Activated T-helper 1 cell treated with anti-CD3 and anti-CD28 coated beads, Interleukin-12 subunit alpha, Interleukin-12 subunit beta, Interleukin-2, Interleukin-4 antibody, amounts not matched to agents 30 ng/mL and 10 ng/mL and 1 ng/mL, durations not matched to agents 14 hours and 24 hours and 36 hours (primary cell): ENCODE measurements at regions of chr14 and their contacts with region 1.

Region 1: GRCh38 chr14:74018586-74019407 is at the starts of genes BBOF1 and ENTPD5:
- DNase-seq: peak; percentile 85
- H3K4me3 Mint-ChIP-seq: peak within 1 kb of the TSS; percentile 95
- H3K27ac Mint-ChIP-seq: peak within 1 kb of the TSS; percentile 97
- H3K4me1 Mint-ChIP-seq: peaks cover 17% of the 10 kb centered on the region
- H3K27me3 Mint-ChIP-seq: peaks cover 3% of the 10 kb centered on the region
- total RNA-seq, gene BBOF1: 0.51 and 0.88 TPM in 2 replicates
- total RNA-seq, gene ENTPD5: 10.7 and 12.2 TPM in 2 replicates

Region 2: DNA sequence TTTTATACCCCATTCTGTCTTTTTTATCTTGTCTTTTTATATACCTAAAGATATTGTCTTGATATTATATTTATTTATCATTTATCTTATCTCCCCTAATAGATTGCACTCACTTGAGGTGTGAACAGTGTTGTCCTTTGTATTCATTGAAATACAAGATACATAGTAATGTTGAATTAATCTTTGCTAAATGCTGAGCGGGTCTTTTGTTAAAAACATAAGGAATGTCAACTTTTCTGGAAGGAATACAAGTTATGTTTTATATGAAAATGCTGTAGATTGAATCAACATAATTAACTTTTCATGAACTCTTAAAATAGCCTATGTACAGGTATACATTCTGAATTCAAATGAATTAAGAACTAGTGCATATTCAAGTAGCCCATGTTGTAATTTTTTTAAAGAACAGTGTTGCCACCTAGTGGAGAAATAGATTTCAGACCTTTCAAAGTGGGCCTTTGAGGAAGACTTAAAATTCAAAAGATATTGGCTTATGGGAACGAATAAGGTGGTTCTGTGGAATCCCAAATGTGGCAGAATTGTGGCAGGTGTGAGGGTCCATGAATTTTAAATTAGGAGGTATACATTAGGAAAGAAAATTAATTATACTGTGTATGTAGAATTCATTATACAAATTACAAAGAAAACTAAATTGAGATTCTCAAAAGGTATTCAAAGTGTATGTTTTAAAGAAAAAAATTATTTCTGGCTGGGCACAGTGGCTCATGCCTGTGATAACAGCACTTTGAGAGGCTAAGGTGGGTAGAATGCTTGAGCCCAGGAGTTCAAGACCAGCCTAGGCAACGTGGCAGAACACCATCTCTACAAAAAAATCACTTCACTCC is 19.4 kb after region 1 on chr14:
- intact Hi-C with region 1: loop called (anchors 1 kb)
- DNase-seq: no peak
- H3K4me3 Mint-ChIP-seq: no peak overlapping the region
- H3K27ac Mint-ChIP-seq: no peak overlapping the region
- H3K4me1 Mint-ChIP-seq: no peaks in the 10 kb centered on the region
- H3K27me3 Mint-ChIP-seq: no peaks in the 10 kb centered on the region

Region 3: GRCh38 chr14:74048281-74048680 is 29.5 kb after region 1 on chr14:
- intact Hi-C with region 1: no loop called
- DNase-seq: no peak
- H3K4me3 Mint-ChIP-seq: no peak overlapping the region
- H3K27ac Mint-ChIP-seq: no peak overlapping the region
- H3K4me1 Mint-ChIP-seq: no peaks in the 10 kb centered on the region
- H3K27me3 Mint-ChIP-seq: peaks cover 5% of the 10 kb centered on the region